ENCODE measurements at regions of chr9 and their contacts with region 1.

Region 1: GRCh38 chr9:124839612-124840299 is 13.5 kb upstream of the WDR38 start:
- DNase-seq: peak in 1 of 3 donors; percentile 51
- ATAC-seq: peak in 1 of 2 donors; percentile 44
- H3K4me3 ChIP-seq: no peak overlapping the region
- H3K27ac ChIP-seq: no peak overlapping the region
- H3K4me1 ChIP-seq: peaks cover 6% of the 10 kb centered on the region
- H3K27me3 ChIP-seq: no peaks in the 10 kb centered on the region

Region 2: GRCh38 chr9:124776954-124777665 is 62.6 kb before region 1 on chr9 and contains the start of gene OLFML2A:
- intact Hi-C with region 1: loop called in 1 of 4 experiments (anchors 5 kb)
- DNase-seq: peak in 2 of 3 donors; percentile 66 to 75
- ATAC-seq: peak; percentile 10 to 51
- H3K4me3 ChIP-seq: peak within 1 kb of the TSS; percentile 53
- H3K27ac ChIP-seq: no peak within 1 kb of the TSS
- H3K4me1 ChIP-seq: peaks cover 13% of the 10 kb centered on the region
- H3K27me3 ChIP-seq: no peaks in the 10 kb centered on the region
- total RNA-seq, gene OLFML2A: 27.4 to 34.4 (median 30.8) TPM

Measured in right cardiac atrium (tissue), 5 donors.